Head of caudate nucleus (tissue), 42 donors: ENCODE measurements at regions of chr2 and their contacts with region 1.

Region 1: DNA sequence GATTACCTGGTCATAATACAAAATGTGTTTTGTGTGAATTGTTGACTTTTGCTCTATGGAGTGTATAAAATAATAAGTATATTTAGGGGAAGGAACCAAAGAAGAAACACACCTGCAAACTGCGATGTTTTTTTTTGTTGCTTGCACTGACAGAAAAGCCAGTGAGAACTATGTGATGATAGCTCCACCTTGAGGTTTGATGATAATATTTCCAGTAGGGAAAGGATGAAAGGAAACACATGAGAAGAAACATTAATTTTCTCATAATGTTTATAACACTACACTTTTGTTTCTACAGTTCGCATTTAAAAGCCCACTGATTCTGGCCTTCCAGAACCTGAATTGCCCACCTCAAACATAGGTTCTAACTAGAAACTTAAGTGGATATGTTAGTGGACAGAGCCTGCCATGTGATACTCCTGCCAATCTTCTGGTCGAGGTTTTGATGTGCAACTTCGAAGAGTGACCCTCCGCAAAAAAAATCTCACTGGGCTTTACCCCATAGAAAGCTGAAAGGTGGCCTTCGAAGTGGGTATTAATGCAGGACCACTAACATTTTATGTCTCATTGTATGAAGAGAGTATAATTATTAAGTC is 476.4 kb upstream of the SPHKAP start:
- DNase-seq: peak in 3 of 42 donors; percentile 4 to 42 (median 29)

Region 2: DNA sequence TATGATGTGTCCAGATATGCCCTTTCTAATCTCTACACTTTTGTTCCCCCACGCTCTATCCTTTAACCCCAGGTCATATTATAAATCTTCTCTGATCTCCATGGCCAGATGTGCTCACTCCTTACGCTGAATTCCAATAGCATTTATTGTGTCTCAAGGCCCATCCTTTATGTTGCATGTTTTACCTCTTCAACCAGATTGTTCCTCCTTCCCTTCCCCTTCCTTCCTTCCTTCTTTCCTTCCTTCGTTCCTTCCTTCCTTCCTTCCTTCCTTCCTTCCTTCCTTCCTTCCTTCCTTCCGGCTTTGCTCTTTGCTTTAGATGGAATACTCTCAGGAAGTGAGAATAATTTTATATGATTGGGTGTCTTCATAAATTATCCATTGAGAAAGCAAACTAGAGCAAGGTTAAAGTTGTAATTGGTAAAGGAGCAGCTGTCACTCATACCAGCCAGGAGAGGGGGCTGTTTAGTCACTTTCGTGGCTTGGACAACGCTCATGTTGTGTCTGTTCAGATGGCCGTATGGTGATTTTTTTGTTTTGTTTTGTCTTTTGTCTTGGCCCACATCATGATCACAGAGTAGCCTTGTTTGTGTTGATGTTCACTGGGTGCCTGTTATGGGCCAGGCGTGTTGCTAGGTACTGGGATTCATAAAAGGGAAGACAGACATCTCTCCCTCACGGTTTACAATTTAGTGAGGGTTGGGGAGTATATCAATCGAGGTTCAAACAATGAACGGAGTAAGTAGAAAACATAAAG is 718.5 kb before region 1 on chr2:
- intact Hi-C with region 1: loop called (anchors 5 kb)
- DNase-seq: peak; percentile 3 to 85 (median 50)

Region 3: GRCh38 chr2:228048838-228049490 is 608.9 kb before region 1 on chr2:
- intact Hi-C with region 1: loop called (anchors 5 kb)
- DNase-seq: peak in 29 of 42 donors; percentile 3 to 70 (median 22)